HepG2 (cell line): ENCODE measurements at regions of chr18 and their contacts with region 1.

Region 1: GRCh38 chr18:9156604-9157249 is 20.1 kb downstream of the ANKRD12 start:
- DNase-seq: no peak
- ATAC-seq: no peak
- H3K4me3 ChIP-seq: no peak overlapping the region
- H3K27ac ChIP-seq: no peak overlapping the region
- H3K4me1 ChIP-seq: peaks cover 24% of the 10 kb centered on the region
- H3K27me3 ChIP-seq: no peaks in the 10 kb centered on the region
- CTCF ChIP-seq: no peak
- EP300 ChIP-seq: no peak
- POLR2A ChIP-seq: no peak
- RAD21 ChIP-seq: no peak

Region 2: DNA sequence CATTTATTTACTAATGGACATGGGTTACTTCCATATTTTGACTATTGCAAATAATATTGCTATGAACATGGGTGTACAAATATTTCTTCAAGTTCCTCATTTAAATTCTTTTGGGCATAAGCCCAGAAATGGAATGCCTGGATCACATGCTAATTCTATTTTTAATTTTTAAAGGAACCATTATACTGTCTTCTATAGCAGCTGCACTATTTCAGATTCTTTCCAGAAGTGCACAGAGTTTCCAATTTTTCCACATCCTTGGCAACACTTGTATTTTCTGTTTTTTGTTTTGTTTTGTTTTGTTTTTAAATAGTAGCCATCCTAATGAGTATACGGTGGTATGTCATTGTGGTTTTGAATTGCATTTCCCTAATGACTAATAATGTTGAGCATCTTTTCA is 310.1 kb after region 1 on chr18:
- CTCF ChIA-PET with region 1: no interaction called
- POLR2A ChIA-PET with region 1: no interaction called
- in situ Hi-C with region 1: no loop called
- intact Hi-C with region 1: loop called (anchors 5 kb)
- DNase-seq: no peak
- ATAC-seq: no peak
- H3K4me3 ChIP-seq: no peak overlapping the region
- H3K27ac ChIP-seq: no peak overlapping the region
- H3K4me1 ChIP-seq: no peaks in the 10 kb centered on the region
- H3K27me3 ChIP-seq: no peaks in the 10 kb centered on the region
- CTCF ChIP-seq: no peak
- EP300 ChIP-seq: no peak
- POLR2A ChIP-seq: no peak
- RAD21 ChIP-seq: no peak